Lower lobe of right lung (tissue), 2 donors: ENCODE measurements at regions of chr6 and their contacts with region 1.

Region 1: GRCh38 chr6:53484476-53485280 is 60.2 kb downstream of the GCLC start:
- DNase-seq: no peak
- ATAC-seq: peak; percentile 71 to 84
- H3K4me3 ChIP-seq: no peak overlapping the region
- H3K27ac ChIP-seq: no peak overlapping the region
- H3K4me1 ChIP-seq: peaks cover 23% of the 10 kb centered on the region
- H3K27me3 ChIP-seq: peaks cover 4% of the 10 kb centered on the region
- CTCF ChIP-seq: peak; percentile 96

Region 2: DNA sequence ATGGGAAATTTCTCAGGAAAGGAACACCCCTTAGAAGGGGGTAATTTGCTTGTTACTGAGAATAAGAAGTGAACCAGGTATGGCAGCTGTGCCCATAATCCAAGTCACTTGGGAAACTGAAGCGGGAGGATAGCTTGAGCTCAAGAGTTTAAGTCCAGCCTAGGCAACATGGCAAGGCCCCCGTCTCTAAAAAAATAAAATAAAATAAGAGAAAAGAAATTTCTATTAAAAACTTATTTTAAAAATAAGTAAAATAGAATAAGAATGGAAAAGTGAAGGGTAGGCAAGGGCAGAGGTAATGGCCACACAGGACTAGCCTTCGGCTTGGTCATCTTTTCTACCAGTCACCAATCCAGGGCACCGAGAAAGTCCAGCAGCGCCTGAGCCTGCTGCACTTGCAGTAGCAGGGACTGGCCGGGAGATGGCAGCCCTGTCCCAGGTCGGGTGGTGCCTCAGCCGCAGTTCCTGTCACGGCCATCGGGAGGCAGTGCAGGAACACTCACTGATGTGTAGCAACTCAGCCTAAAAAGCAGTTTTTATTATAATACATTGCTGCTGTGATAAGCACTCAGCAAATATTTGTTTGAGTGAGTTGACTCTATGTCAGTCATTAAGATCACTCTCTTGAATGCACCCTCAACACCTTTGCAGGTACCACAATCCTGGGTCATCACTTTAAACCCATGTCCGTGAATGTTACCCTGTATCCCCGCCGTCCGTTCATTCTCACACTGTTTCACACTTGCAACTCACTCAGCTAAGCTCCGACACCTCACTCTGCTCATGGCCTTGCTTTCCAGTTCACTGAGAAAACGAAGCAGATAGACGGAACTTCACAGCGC is 312.9 kb before region 1 on chr6:
- intact Hi-C with region 1: loop called (anchors 5 kb)
- DNase-seq: peak; percentile 93
- ATAC-seq: peak; percentile 96 to 99
- H3K4me3 ChIP-seq: no peak overlapping the region
- H3K27ac ChIP-seq: no peak overlapping the region
- H3K4me1 ChIP-seq: no peaks in the 10 kb centered on the region
- H3K27me3 ChIP-seq: no peaks in the 10 kb centered on the region
- CTCF ChIP-seq: peak; percentile 100

Region 3: DNA sequence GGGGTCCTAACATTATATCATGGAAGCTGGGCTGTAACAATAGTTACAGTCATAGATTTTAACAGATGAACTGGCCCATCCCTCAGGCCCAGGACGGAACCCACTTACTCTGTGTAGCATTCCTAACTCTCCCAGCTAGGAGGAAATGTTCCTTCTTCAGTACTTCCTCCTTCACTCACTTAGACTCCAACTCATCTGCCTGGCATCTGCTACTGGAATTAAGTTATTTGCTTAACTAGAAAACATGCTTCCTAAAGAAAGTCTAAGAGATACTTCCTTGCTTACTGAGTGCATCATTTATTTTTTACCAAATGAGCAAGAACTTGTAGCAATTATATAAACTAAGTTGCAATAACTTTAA is 39.8 kb after region 1 on chr6:
- intact Hi-C with region 1: no loop called
- DNase-seq: no peak
- ATAC-seq: no peak
- H3K4me3 ChIP-seq: no peak overlapping the region
- H3K27ac ChIP-seq: no peak overlapping the region
- H3K4me1 ChIP-seq: no peaks in the 10 kb centered on the region
- H3K27me3 ChIP-seq: no peaks in the 10 kb centered on the region
- CTCF ChIP-seq: no peak

Region 4: DNA sequence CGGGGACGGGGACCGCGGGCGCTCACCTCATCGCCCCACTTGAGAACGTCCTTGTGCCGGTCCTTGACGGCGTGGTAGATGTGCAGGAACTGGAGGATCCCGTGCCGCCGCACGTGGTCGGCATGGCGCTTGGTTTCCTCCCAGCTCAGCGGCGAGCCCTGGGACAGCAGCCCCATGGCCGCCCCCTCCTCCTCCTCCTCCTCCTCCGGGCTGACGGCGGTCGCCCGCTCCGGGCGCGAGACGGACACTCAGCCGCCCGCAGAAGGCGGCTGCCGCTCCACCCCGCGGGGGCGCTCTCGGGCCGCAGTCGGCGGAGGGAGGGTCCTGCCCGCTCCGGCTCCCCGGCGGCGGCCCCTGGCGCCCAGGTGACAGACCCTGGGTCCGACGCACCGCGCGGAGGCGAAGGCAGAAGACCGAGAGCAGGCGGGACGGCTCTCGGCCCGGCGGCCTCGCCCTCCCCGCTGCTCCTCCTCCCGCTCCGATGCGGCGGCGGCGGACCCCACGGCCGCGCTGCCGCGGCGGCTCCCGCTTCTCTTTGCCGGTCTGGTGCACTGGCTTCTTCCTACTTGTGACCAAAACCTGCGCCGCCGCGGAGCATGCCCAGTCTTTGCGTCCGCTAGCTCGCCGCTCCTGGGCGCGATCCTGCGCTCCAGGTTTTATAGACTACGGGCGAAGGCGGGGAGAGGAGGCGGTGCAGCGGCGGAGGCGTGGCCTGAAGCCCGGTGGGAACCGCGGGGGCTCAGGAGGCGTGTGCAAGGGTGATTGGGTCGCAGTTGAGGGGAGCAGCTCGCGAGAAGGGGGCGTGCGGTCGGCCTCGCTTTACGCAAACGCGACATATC is 60.0 kb after region 1 on chr6 and contains the start of gene GCLC:
- intact Hi-C with region 1: no loop called
- DNase-seq: peak; percentile 95
- ATAC-seq: peak; percentile 82 to 88
- H3K4me3 ChIP-seq: peak within 1 kb of the TSS; percentile 68
- H3K27ac ChIP-seq: peak within 1 kb of the TSS; percentile 92
- H3K4me1 ChIP-seq: peaks cover 38% of the 10 kb centered on the region
- H3K27me3 ChIP-seq: no peaks in the 10 kb centered on the region
- CTCF ChIP-seq: peak; percentile 64
- total RNA-seq, gene GCLC: 37.0 TPM

Region 5: GRCh38 chr6:53603386-53604116 is 118.9 kb after region 1 on chr6:
- intact Hi-C with region 1: no loop called
- DNase-seq: no peak
- ATAC-seq: no peak
- H3K4me3 ChIP-seq: no peak overlapping the region
- H3K27ac ChIP-seq: no peak overlapping the region
- H3K4me1 ChIP-seq: no peaks in the 10 kb centered on the region
- H3K27me3 ChIP-seq: no peaks in the 10 kb centered on the region
- CTCF ChIP-seq: no peak